ENCODE measurements at regions of chr2 and their contacts with region 1.

Region 1: GRCh38 chr2:1769703-1770422 is 25.5 kb upstream of the PXDN start:
- DNase-seq: peak in 4 of 5 donors; percentile 7 to 50 (median 15)
- H3K4me3 ChIP-seq: no peak overlapping the region
- H3K4me3 Mint-ChIP-seq: no peak overlapping the region
- H3K27ac ChIP-seq: no peak overlapping the region
- H3K27ac Mint-ChIP-seq: peak overlapping the region in 1 of 8 donors; percentile 84
- H3K4me1 ChIP-seq: no peaks in the 10 kb centered on the region
- H3K4me1 Mint-ChIP-seq: no peaks in the 10 kb centered on the region
- H3K27me3 ChIP-seq: no peaks in the 10 kb centered on the region
- H3K27me3 Mint-ChIP-seq: peaks cover 0 to 2% of the 10 kb centered on the region in 2 donors

Region 2: DNA sequence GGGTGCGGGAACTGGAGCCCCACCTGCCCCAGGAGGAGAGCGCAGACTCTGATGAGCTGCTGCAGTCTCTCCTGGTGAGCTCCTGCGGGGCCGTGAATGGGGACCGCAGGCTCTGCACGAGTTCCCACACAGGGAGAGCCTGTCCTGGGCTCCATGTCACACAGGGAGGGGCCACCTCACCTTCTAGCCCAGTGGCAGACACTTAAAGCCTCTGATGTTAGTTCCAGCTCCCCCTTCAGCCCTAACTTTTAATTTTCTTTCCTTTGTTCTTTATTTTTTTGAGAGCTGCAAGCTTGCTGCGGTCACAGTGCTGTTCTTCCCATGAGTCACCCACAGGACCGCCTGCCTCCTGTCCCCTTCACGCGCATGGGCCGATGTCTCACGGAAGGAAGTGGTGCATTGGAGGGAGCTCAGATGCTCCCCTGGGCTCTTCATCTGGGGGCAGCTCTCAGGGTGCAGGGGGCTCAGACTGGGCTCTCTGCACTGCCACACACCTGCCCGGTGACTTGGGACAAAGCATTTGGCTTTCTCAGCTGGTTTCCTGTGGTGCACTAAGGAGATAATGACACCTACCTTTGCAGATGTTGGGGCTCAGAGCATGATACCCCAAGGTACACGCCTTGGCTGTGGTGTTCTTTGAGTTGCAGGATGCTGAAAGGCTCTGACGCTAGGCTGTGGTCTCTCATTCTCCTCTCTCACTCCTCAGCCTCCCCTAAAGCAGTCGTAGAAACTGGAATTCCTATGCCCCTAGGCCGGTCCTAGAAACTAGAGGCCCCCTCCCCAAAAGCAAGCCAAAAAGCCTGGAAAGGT is 11.6 kb after region 1 on chr2:
- CTCF ChIA-PET with region 1: interaction called, 11 read pairs
- POLR2A ChIA-PET with region 1: no interaction called
- DNase-seq: peak in 3 of 5 donors; percentile 32 to 75 (median 62)
- H3K4me3 ChIP-seq: no peak overlapping the region
- H3K4me3 Mint-ChIP-seq: peak overlapping the region in 4 of 7 donors; percentile 33 to 89 (median 56)
- H3K27ac ChIP-seq: no peak overlapping the region
- H3K27ac Mint-ChIP-seq: peak overlapping the region; percentile 26 to 97 (median 76)
- H3K4me1 ChIP-seq: no peaks in the 10 kb centered on the region
- H3K4me1 Mint-ChIP-seq: peaks cover 10 to 33% (median 18%) of the 10 kb centered on the region in 3 donors
- H3K27me3 ChIP-seq: no peaks in the 10 kb centered on the region
- H3K27me3 Mint-ChIP-seq: peaks cover 0 to 7% of the 10 kb centered on the region in 2 donors

Region 3: GRCh38 chr2:2057125-2057721 is 287.4 kb after region 1 on chr2:
- CTCF ChIA-PET with region 1: no interaction called
- POLR2A ChIA-PET with region 1: no interaction called
- DNase-seq: peak in 4 of 5 donors; percentile 2 to 66 (median 64)
- H3K4me3 ChIP-seq: peak overlapping the region; percentile 42
- H3K4me3 Mint-ChIP-seq: peak overlapping the region in 4 of 7 donors; percentile 7 to 74 (median 52)
- H3K27ac ChIP-seq: no peak overlapping the region
- H3K27ac Mint-ChIP-seq: peak overlapping the region in 7 of 8 donors; percentile 30 to 94 (median 53)
- H3K4me1 ChIP-seq: peaks cover 23% of the 10 kb centered on the region
- H3K4me1 Mint-ChIP-seq: peaks cover 16 to 21% (median 16%) of the 10 kb centered on the region in 3 donors
- H3K27me3 ChIP-seq: no peaks in the 10 kb centered on the region
- H3K27me3 Mint-ChIP-seq: no peaks in the 10 kb centered on the region

Measured in CD8-positive, alpha-beta memory T cell (primary cell).